ENCODE measurements at regions of chr20 and their contacts with region 1.

Region 1: DNA sequence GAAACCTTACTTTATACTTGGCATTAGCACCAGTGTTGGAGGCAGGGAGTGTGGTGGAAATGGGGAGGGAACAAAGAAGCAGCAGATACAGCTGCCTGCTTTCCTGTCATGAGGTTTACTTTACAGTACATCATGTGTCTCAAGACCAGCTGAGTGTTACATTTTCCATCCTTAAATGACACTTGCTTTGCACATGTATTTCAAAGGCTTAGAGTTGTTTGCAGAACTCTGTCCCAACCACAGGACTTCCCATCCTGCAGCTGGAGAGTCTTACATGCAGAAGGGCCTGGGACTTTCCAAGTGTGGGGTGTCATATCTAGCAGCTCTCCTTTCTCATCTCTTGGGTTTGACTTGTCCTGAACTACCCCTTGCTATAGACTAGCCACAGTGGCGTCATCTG is 395.9 kb downstream of the DHX35 start:
- DNase-seq: no peak
- ATAC-seq: peak; percentile 37 to 75 (median 52)
- H3K4me3 ChIP-seq: no peak overlapping the region
- H3K27ac ChIP-seq: no peak overlapping the region
- H3K4me1 ChIP-seq: peaks cover 18% of the 10 kb centered on the region
- H3K27me3 ChIP-seq: no peaks in the 10 kb centered on the region
- CTCF ChIP-seq: no peak

Region 2: GRCh38 chr20:37406010-37406998 is 1951.7 kb before region 1 on chr20:
- intact Hi-C with region 1: loop called in 1 of 2 experiments (anchors 10 kb)
- DNase-seq: peak in 1 of 2 donors; percentile 52
- ATAC-seq: peak; percentile 59 to 81 (median 70)
- H3K4me3 ChIP-seq: peak overlapping the region; percentile 57
- H3K27ac ChIP-seq: no peak overlapping the region
- H3K4me1 ChIP-seq: no peaks in the 10 kb centered on the region
- H3K27me3 ChIP-seq: peaks cover 0 to 36% (median 9%) of the 10 kb centered on the region in 3 donors
- CTCF ChIP-seq: no peak

Region 3: GRCh38 chr20:39234520-39235095 is 123.4 kb before region 1 on chr20:
- intact Hi-C with region 1: no loop called
- DNase-seq: no peak
- ATAC-seq: no peak
- H3K4me3 ChIP-seq: no peak overlapping the region
- H3K27ac ChIP-seq: no peak overlapping the region
- H3K4me1 ChIP-seq: no peaks in the 10 kb centered on the region
- H3K27me3 ChIP-seq: no peaks in the 10 kb centered on the region
- CTCF ChIP-seq: no peak